Panc1 (cell line): ENCODE measurements at regions of chr7 and their contacts with region 1.

Region 1: GRCh38 chr7:128459394-128459878 is 3.8 kb downstream of the HILPDA start:
- DNase-seq: no peak
- ATAC-seq: peak; percentile 64
- H3K4me3 ChIP-seq: peak overlapping the region in 1 of 2 experiments; percentile 70; a peak in 2 of 4 replicates
- H3K27ac ChIP-seq: peak overlapping the region; percentile 93
- H3K4me1 ChIP-seq: peaks cover 45% of the 10 kb centered on the region
- H3K27me3 ChIP-seq: no peaks in the 10 kb centered on the region
- CTCF ChIP-seq: peak; percentile 86

Region 2: DNA sequence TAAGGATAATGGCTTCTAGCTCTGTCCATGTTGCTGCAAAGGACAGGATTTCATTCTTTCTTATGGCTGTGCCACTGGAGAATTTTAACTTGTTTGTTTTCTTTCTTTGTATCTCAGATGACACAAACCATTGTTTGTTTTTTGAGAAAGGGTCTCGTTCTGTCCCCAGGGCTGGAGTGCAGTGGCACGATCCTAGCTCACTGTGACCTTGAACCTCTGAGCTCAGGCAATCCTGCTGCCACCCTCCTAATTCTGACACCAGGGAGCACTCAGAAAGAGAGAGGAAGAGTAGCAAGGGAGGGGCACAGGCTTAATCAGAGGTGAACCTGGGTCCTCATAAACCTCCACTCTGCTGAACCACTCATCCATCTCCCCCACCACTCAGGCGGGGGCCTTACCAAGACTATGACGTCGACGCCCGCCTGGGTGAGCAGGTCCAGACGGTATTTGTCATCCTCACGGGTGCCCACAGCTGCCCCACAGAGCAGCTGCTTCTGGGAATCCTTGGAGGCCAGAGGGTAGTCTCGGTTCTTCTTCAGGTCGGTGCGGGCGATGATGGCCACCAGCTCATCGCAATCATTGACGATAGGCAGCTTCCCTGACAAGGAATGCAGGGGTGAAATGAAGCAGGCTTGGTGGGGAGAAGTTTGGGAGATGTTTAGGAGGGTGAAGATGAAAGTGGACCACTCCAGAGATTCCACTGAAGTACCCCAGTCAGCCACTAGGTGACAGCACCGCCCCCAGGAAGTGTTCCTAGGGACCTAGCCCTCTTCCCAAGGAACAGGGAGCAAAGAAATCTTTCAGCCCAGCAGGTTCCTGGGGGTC is 61.2 kb before region 1 on chr7:
- CTCF ChIA-PET with region 1: interaction called, 10 read pairs
- POLR2A ChIA-PET with region 1: no interaction called
- in situ Hi-C with region 1: no loop called
- intact Hi-C with region 1: no loop called
- DNase-seq: peak; percentile 45
- ATAC-seq: peak; percentile 89
- H3K4me3 ChIP-seq: no peak overlapping the region
- H3K27ac ChIP-seq: no peak overlapping the region
- H3K4me1 ChIP-seq: no peaks in the 10 kb centered on the region
- H3K27me3 ChIP-seq: no peaks in the 10 kb centered on the region
- CTCF ChIP-seq: peak; percentile 97

Region 3: GRCh38 chr7:128435327-128435686 is 24.1 kb before region 1 on chr7:
- CTCF ChIA-PET with region 1: interaction called, 133 read pairs
- POLR2A ChIA-PET with region 1: interaction called, 5 read pairs
- in situ Hi-C with region 1: no loop called
- intact Hi-C with region 1: loop called (anchors 2 kb)
- DNase-seq: no peak
- ATAC-seq: peak; percentile 88
- H3K4me3 ChIP-seq: peak overlapping the region in 1 of 2 experiments; percentile 14; a peak in 2 of 4 replicates
- H3K27ac ChIP-seq: peak overlapping the region; percentile 97
- H3K4me1 ChIP-seq: peaks cover 54% of the 10 kb centered on the region
- H3K27me3 ChIP-seq: no peaks in the 10 kb centered on the region
- CTCF ChIP-seq: no peak